ENCODE measurements at regions of chr12 and their contacts with region 1.

Region 1: DNA sequence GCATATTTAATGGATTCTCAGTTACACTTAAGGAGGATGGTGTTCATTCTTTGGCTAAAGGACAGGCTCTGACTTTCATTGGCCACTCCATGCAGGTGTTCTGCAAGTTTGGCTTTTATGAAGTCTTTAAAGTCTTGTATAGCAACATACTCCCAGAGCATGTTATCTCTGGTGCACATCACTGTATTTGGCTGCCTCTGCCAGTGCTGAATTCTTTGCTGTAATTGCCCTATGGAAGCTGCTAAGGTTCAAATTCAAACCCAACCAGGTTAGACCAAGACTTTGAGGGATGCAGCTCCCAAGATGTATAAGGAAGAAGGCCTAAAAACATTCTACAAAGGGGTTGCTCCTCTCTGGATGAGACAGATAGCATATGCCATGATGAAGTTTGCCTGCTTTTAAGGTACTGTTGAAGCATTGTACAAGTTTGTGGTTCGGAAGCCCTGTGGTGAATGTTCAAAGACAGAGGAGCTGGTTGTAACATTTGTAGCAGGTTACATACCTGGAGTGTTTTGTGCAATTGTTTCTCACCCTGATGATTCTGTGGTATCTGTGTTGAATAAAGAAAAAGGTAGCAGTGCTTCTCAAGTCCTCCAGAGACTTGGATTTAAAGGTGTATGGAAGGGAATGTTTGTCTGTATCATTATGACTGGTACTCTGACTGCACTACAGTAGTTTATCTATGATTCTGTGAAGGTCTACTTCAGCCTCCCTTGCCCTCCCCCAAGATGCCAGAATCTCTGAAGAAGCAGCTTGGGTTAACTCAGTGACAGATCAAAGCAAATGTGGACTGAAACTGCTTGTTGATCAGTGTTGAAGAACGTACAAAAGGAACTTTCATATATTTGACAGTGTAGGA is 19.4 kb downstream of the TMEM116 start:
- DNase-seq: peak; percentile 40
- H3K4me3 Mint-ChIP-seq: peak overlapping the region; percentile 79
- H3K27ac Mint-ChIP-seq: peak overlapping the region; percentile 44
- H3K4me1 Mint-ChIP-seq: peaks cover 58% of the 10 kb centered on the region
- H3K27me3 Mint-ChIP-seq: no peaks in the 10 kb centered on the region

Region 2: DNA sequence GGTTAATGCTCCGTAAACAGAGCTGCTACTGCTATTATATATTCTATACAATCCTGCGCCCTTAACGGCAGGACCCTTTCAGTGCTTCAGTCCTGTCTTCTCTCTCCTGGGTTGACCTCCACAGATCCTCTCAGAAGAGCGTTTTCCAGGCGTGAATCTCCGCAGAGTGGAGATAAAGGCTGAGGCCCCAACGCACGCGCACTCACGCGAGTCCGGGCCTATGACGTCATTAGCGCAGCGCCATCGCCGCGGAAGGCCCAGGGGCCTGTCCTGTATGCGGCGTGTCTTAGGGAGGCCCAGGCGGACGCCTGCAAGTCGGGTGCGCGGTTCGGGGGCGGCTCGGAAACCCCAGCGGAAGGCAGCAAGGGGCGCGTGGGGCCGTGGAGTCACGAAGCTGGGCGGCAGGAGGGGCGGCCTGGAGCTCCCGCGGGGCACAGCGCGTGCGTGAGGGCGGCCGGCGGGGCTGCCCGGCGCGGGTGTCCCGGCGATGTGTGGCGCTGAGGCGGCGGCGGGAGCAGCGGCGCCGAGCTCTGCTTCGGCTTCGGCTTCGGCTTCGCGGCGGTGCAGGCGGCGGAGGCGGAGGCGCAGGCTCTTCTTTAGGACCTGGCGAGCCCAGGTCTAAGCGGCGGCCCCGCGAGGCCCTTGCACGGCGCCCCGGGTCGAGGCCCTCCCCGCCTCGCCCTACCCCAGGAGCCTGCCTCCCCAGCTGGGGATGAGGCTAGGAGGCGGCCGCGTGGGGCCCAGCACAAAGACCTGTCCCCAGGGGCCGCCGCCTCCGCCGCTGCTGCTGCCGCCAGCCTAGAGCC is 151.6 kb before region 1 on chr12 and contains the start of gene MAPKAPK5:
- intact Hi-C with region 1: no loop called
- DNase-seq: peak; percentile 95
- H3K4me3 Mint-ChIP-seq: peak within 1 kb of the TSS; percentile 97
- H3K27ac Mint-ChIP-seq: peak within 1 kb of the TSS; percentile 98
- H3K4me1 Mint-ChIP-seq: peaks cover 36% of the 10 kb centered on the region
- H3K27me3 Mint-ChIP-seq: no peaks in the 10 kb centered on the region
- total RNA-seq, gene MAPKAPK5: 66.4 and 68.1 TPM in 2 replicates

Region 3: DNA sequence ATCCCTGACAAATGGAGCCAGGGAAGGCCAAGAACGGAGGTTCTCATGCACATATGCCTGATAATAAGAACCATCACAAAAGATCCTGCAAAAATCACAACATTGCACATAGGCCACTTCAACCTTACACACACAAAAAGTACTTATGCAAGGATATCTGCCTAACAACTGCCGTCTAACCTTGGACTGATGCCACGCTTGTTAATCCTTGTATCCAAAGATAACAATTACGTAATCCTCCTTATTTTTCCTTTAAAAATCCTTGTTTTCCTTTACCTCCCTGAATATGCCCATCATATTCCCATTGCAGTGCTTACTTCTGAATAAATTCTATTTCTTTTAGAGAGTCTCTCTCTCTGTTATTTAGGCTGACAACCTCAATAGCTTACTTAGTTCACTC is 40.1 kb before region 1 on chr12:
- intact Hi-C with region 1: loop called (anchors 2 kb)
- DNase-seq: no peak
- H3K4me3 Mint-ChIP-seq: no peak overlapping the region
- H3K27ac Mint-ChIP-seq: no peak overlapping the region
- H3K4me1 Mint-ChIP-seq: peaks cover 19% of the 10 kb centered on the region
- H3K27me3 Mint-ChIP-seq: no peaks in the 10 kb centered on the region

Region 4: DNA sequence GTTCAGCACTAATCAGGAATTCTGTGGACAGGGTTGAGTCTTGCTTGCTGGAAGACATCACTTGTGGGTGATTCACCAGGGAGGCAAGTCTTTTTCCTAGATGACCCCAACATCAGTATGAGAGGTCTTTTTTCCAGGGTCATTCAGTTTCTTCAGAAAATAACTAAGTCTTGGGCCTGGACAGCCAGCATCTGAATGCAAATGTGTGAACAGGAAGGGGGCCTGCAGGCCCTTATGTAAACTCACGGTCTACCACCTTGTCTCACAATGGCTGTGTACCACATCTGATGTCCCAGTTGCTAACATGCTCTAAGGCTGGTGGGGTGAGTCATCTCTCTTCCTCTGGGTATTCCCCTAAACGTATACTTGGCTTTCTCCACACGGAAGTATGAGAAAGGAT is 309.5 kb after region 1 on chr12:
- intact Hi-C with region 1: no loop called
- DNase-seq: peak; percentile 23
- H3K4me3 Mint-ChIP-seq: no peak overlapping the region
- H3K27ac Mint-ChIP-seq: peak overlapping the region; percentile 68
- H3K4me1 Mint-ChIP-seq: peaks cover 7% of the 10 kb centered on the region
- H3K27me3 Mint-ChIP-seq: no peaks in the 10 kb centered on the region

Measured in activated T-helper 2 cell treated with anti-CD3 and anti-CD28 coated beads, Interferon-gamma antibody, Interleukin-2, Interleukin-4, amounts not matched to agents 10 μg/mL and 5 μg/mL and 100 μg/mL, durations not matched to agents 14 hours and 24 hours and 36 hours (primary cell).